ENCODE measurements at regions of chr11 and their contacts with region 1.

Region 1: DNA sequence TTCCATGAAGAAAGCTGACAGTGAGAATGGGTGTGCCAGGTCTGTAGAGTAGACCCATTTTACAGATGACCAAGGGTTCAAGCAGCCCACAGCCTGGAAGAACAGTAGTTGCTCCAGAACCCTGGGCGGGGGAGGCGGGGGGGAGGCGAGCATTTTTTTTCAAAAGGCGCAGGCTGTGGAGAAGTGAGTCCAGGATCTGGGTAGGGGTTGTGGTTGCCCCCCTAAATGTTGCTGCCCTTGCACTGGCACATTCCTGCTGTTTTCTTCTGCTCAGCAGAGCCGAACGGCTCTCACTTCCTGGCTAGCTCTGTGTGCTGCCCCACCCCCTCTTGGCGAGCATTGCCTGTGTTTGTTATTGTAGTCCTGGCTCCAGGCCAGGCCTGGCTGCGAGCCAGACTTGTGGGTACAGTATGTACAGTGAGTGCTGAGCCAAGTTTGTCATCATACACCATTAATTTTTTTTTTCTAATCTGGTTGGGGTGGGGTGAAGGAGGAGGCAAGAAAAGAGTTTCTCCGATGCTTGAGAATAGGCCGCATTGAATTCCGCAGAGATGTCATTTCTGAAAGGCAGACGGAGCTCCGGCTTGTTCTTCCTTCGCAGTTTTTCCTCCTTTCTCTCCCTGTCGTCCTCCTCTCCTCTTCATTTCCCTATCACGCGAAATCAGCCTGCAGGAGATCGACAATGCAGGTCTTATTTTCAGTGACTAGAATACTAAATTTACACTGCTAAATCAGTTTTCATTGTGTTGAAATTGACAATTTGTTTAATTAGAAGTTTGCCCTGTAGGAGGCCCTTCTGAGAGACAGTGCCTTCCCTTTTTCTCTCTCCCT is 100.5 kb downstream of the ZBTB16 start:
- DNase-seq: peak; percentile 98
- H3K4me3 ChIP-seq: no peak overlapping the region
- H3K27ac ChIP-seq: peak overlapping the region; percentile 99
- H3K4me1 ChIP-seq: peaks cover 57% of the 10 kb centered on the region
- H3K27me3 ChIP-seq: no peaks in the 10 kb centered on the region
- CTCF ChIP-seq: peak in 1 of 4 experiments; percentile 13
- POLR2A ChIP-seq: peak; percentile 36

Region 2: GRCh38 chr11:114059278-114059983 is 100.6 kb before region 1 on chr11 and contains the start of gene ZBTB16:
- intact Hi-C with region 1: loop called (anchors 5 kb)
- DNase-seq: peak; percentile 88
- H3K4me3 ChIP-seq: peak within 1 kb of the TSS; percentile 97 to 99
- H3K27ac ChIP-seq: peak within 1 kb of the TSS; percentile 100
- H3K4me1 ChIP-seq: peaks cover 11% of the 10 kb centered on the region
- H3K27me3 ChIP-seq: no peaks in the 10 kb centered on the region
- CTCF ChIP-seq: peak; percentile 9 to 67 (median 54)
- POLR2A ChIP-seq: peak; percentile 79
- total RNA-seq, gene ZBTB16: 171 to 230 TPM

Region 3: GRCh38 chr11:114180301-114181055 is 20.5 kb after region 1 on chr11:
- intact Hi-C with region 1: loop called (anchors 1 kb)
- DNase-seq: peak; percentile 63
- H3K4me3 ChIP-seq: peak overlapping the region; percentile 21 to 36
- H3K27ac ChIP-seq: peak overlapping the region; percentile 99
- H3K4me1 ChIP-seq: peaks cover 54% of the 10 kb centered on the region
- H3K27me3 ChIP-seq: no peaks in the 10 kb centered on the region
- CTCF ChIP-seq: peak in 3 of 4 experiments; percentile 54 to 83 (median 73)
- POLR2A ChIP-seq: no peak

Region 4: GRCh38 chr11:114197799-114198500 is 37.9 kb after region 1 on chr11:
- intact Hi-C with region 1: loop called (anchors 5 kb)
- DNase-seq: peak; percentile 88
- H3K4me3 ChIP-seq: no peak overlapping the region
- H3K27ac ChIP-seq: peak overlapping the region; percentile 94 to 95
- H3K4me1 ChIP-seq: peaks cover 53% of the 10 kb centered on the region
- H3K27me3 ChIP-seq: no peaks in the 10 kb centered on the region
- CTCF ChIP-seq: peak in 1 of 4 experiments; percentile 40
- POLR2A ChIP-seq: peak; percentile 33

Measured in prostate gland (tissue), 2 donors.